Left ventricle myocardium superior (tissue), 1 donor: ENCODE measurements at regions of chr2 and their contacts with region 1.

Region 1: DNA sequence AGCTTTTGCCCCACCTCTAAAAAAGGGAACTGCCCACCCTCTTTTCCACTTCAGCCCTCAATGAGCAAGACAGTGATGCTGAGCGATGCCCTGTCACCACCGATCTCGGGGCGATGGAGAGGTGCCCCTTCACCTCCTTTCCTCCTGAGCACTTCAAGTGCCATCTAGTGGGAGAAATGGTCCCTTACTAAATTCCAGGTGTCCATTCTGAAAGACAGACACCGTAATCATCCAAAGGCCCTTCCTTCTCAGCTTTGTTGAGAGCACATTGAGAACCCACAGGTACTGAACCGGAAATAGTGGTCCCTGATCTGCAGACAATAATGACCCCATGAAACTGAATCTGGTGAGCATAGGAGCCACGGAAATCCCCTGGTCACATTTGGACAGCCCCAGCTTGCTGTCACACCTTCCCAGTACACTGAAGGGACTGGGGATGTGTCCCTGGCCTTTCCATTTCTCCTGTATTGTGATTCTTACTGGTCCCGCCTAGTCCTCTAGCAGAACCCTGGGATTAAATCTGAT is 38.5 kb downstream of the KCTD18 start:
- DNase-seq: no peak
- ATAC-seq: no peak

Region 2: GRCh38 chr2:200121931-200122330 is 349.5 kb before region 1 on chr2:
- intact Hi-C with region 1: no loop called
- DNase-seq: no peak
- ATAC-seq: no peak

Region 3: DNA sequence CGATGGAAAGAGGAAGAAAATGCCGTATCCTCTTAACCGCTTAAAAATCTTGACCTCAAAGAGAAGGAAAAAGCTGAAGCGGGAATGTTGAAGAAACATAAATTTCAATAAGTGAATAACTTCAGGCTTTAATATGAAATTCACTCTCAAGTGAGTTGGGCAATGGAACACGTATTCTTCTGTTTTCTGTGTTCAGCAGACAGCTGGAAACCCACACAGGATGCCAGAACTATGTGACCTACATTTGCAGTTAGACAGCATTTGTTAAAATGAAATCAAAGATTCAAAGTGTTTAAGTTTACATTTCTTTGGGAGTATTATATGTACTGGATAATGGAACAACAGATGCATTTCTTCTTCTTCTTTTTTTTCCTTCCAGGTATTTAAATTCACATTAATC is 245.4 kb before region 1 on chr2:
- intact Hi-C with region 1: loop called (anchors 10 kb)
- DNase-seq: no peak
- ATAC-seq: peak; percentile 77